Activated CD8-positive, alpha-beta T cell treated with anti-CD3 and anti-CD28 coated beads for 36 hours (primary cell): ENCODE measurements at regions of chr6 and their contacts with region 1.

Region 1: DNA sequence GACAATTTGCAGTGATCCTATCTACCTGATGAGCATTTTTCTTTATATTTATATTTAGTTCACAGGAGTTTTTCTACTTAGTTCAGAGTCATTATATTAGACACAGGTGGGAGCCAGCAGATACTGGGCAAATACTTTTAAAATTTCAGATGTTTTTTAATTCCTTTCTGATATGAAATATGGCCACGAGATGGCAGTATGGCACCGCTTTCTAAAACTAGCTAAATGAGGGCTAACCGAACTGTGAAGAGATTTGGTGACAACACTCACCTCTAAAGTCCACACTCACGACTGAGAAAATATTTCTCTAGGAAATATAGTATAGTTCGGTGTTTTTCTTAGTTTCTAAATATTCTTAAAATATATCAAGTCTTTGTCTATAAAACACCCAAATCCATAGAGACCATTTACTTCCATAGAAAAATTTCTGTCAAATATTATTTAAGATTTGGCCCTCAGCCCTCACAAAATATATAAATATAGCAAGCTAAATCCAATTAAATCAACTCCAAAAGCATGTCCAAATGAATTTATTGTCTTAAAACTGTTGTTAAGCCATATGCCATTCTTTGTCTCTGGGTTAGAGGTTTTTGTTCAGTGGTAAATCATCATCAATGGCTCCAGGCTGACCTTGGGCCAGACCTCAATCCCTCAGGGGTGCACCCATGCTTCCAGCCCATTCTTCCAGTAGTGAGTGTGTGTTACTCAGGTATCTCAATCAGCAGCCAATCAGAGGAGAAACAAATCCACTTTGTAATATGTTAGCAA is 63.6 kb downstream of the HUS1B start:
- DNase-seq: peak; percentile 85
- ATAC-seq: peak; percentile 79
- H3K4me3 Mint-ChIP-seq: no peak overlapping the region
- H3K27ac Mint-ChIP-seq: peak overlapping the region; percentile 35
- H3K4me1 Mint-ChIP-seq: peaks cover 7% of the 10 kb centered on the region
- H3K27me3 Mint-ChIP-seq: no peaks in the 10 kb centered on the region
- CTCF ChIP-seq: peak; percentile 74

Region 2: GRCh38 chr6:606829-607379 is 13.6 kb after region 1 on chr6:
- CTCF ChIA-PET with region 1: interaction called, 23 read pairs
- POLR2A ChIA-PET with region 1: no interaction called
- intact Hi-C with region 1: no loop called
- DNase-seq: no peak
- ATAC-seq: no peak
- H3K4me3 Mint-ChIP-seq: no peak overlapping the region
- H3K27ac Mint-ChIP-seq: no peak overlapping the region
- H3K4me1 Mint-ChIP-seq: peaks cover 6% of the 10 kb centered on the region
- H3K27me3 Mint-ChIP-seq: no peaks in the 10 kb centered on the region
- CTCF ChIP-seq: no peak

Region 3: DNA sequence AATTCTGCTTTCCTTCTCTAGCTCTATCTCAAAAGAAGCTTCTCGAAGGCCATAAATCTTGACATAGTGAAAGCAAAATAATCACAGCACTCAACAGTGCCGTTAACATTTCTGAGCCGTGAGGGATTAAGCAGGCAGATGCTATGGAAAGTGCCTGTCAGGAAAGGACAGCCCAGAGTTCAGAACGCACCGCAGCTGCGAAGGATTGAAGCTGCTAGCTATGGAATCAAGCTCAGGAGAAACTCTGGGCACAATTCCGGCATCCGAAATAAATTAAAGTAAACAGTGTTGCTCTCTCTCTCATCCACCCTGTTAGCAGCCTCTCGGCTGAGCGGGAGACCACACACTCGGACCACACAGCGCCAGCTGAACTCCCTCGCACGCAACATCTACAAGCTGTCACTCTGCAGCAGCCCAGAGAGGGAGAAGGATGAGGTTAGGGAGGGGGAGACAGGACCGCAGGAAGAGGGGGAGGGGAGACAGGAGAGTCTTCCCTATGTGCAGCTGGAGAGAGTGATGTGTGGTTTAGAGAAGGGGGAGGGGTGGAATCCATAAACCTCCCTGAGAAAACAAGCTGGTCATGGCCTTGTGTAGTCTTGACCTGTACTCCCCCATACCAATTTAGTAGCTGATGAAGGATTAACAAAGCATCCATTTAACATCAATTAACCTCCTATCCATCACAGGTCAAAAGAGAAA is 90.6 kb after region 1 on chr6:
- CTCF ChIA-PET with region 1: interaction called, 11 read pairs
- POLR2A ChIA-PET with region 1: no interaction called
- intact Hi-C with region 1: no loop called
- DNase-seq: peak; percentile 55
- ATAC-seq: peak; percentile 37
- H3K4me3 Mint-ChIP-seq: peak overlapping the region; percentile 36
- H3K27ac Mint-ChIP-seq: peak overlapping the region; percentile 36
- H3K4me1 Mint-ChIP-seq: peaks cover 51% of the 10 kb centered on the region
- H3K27me3 Mint-ChIP-seq: no peaks in the 10 kb centered on the region
- CTCF ChIP-seq: no peak

Region 4: DNA sequence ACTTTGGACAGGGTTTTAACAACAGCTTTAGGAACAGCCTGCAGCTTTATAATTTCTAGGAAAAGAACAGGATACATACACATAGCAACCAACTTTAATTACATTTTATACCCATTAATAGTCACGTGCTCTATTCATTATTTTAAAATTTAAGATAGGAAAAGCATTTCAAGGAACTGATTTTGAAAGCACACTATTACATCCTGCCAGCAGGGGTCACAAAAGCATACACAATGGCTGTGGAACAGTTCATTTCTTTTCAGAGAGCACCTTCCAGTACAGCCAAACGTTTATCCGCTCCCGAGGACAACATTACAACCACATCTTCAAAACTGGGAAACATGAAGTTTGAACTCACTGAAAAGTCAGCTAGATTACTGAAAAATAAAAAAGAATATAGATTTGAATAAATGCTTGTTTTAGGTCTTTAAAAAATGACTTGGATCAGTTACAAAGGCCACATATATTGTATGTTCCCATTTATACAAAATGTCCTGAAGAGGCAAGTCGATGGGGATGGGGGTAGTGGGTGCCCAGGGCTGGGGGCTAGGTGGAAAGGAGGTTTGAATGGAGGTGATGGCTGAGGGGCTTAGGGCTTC is 204.3 kb after region 1 on chr6:
- CTCF ChIA-PET with region 1: interaction called, 19 read pairs
- POLR2A ChIA-PET with region 1: no interaction called
- intact Hi-C with region 1: loop called (anchors 10 kb)
- DNase-seq: peak; percentile 65
- ATAC-seq: peak; percentile 75
- H3K4me3 Mint-ChIP-seq: no peak overlapping the region
- H3K27ac Mint-ChIP-seq: no peak overlapping the region
- H3K4me1 Mint-ChIP-seq: no peaks in the 10 kb centered on the region
- H3K27me3 Mint-ChIP-seq: peaks cover 35% of the 10 kb centered on the region
- CTCF ChIP-seq: peak; percentile 91